Right ventricle myocardium inferior (tissue), 1 donor: ENCODE measurements at regions of chr11 and their contacts with region 1.

Region 1: DNA sequence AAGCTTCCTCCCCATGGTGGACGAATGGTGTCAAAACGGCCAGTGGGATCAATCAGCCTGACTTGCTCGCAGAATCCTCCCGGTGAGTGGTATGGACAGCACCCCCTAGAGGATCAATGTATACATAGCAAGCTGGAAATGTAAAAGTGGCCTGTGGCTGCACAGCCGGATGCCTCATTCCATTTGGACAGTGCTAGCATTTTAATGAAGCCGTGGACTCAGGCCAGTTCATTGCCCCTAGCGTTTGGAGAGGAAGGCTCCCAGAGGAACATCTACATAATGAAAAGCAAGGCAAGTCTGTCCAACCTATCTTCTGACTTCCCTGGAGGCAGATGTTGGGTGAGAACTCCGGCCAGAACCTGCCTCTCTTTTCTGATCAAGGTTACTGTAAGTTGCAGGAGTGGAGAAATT is 942.3 kb downstream of the NTM start:
- DNase-seq: no peak
- ATAC-seq: peak; percentile 20

Region 2: GRCh38 chr11:131609337-131609736 is 703.4 kb before region 1 on chr11:
- intact Hi-C with region 1: no loop called
- DNase-seq: no peak
- ATAC-seq: no peak

Region 3: GRCh38 chr11:132114185-132114584 is 198.5 kb before region 1 on chr11:
- intact Hi-C with region 1: loop called (anchors 2 kb)
- DNase-seq: no peak
- ATAC-seq: no peak

Region 4: DNA sequence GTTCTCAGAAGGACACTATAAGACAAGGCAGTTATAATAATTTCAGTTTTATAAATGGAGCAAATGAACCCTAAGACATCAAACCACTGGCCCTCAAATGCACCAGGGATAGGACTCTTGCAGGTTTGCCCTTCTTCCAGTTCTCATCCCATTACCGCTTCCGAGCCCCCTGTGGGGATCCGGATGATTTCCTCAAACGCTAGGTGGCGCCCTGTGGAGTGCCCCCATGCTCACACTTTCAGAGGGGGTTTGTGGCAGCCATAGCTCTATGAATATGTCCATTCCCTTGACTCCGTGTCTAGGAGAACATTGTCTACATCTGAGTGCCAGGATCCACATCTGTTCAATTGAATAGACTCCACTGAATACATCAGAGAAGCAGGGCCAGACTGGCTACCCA is 126.0 kb before region 1 on chr11:
- intact Hi-C with region 1: loop called (anchors 10 kb)
- DNase-seq: no peak
- ATAC-seq: no peak

Region 5: DNA sequence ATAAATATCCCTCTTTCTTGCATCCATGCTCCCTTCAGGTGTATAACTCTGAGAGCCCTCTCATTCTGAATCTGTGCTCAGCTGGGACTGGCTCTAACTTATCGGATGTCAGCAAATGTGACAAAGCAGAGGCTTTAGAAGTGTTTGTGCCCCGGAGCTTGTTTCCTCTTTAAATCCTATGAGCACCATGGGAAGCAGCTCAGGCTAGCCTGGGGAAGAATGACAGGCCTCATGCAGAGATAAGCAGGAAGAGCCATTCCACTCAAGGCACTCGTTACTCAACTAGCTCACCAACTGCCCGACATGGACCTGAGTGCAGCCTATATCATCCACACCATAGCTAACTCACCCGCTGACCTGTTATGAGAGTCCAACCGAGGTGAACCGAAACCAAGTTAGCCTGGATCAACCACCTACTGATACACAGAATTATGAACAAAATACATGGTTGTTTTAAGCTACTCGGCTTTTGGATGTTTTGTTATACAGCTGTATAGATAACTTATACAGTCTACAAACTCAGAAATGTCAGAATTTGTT is 48.4 kb after region 1 on chr11:
- intact Hi-C with region 1: no loop called
- DNase-seq: no peak
- ATAC-seq: no peak

Region 6: DNA sequence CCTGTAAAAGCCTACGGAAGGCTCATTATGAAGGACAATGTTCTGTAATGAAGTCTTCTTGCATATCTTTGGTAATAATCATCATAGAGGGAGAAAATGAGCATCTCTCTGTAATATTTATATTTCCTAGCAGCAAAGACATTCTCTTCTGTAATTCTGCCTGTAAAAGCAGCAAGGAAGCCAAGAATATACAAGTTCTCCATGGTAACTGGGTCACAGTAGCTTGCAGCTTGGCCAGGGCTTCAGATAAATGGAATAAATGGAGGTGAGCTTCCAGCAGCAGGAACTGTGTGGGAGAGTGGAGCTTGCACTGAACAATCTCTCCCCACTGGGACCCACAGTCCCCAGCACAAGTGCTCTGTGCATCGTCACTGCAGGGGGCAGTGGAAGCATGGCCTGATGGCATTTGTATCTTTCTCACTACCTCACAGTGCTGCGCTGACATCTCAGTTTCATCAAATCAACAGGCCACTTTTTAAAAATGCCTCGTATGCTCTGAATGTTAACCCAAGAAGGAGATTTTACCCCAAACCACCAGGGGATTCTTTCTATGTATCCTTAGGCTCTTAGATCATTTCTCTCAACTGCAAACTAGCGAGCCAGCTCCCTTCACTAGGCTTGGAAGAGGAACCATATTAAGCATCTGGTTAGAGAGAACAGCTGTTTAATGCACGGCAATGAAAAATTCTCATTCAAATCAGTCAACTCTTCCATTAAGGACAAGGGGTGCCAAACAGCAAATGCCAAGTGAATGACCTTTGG is 159.9 kb after region 1 on chr11:
- intact Hi-C with region 1: no loop called
- DNase-seq: no peak
- ATAC-seq: no peak